Left cardiac atrium (tissue), 4 donors: ENCODE measurements at regions of chr19 and their contacts with region 1.

Region 1: DNA sequence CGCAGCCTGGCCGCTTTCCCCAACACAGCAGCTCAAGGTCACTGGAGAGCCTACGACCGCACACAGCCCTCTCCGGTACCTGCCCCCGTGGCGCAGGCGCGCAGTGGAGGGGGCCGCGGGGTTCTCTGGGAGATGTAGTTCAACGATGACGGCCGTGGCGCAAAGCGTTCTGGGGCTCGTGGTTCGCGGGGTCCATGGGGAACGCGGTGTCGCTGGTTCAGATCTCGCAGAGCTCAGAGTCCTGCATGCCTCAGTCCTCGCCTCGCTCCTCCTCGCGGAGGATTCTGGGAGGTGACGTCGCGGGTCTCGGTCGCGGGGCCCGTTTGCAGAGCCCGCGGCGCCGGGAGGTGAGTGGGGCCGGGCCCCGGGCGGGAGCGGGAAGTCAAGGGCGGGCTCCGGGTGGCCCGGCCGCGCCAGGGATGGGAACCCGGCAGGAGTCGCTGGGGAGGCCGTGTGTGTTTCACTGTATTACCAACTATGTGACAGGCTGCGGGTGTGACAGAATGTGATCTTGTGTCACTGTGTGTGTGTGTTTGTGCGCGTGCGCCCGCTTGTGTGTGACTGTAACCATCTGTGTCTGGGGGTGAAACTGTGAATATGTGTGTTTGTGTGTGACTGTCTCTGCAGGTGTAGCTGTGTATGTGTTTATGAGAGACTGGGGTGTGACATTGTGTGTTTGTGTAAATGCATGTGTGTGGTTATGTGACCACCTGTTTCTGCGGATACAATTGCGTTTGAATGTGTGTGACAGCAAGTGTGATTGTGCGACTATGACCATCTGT is at the start of gene ZNF527:
- DNase-seq: peak; percentile 99
- ATAC-seq: peak; percentile 100
- total RNA-seq, gene ZNF527: 6.1 to 7.1 TPM

Region 2: DNA sequence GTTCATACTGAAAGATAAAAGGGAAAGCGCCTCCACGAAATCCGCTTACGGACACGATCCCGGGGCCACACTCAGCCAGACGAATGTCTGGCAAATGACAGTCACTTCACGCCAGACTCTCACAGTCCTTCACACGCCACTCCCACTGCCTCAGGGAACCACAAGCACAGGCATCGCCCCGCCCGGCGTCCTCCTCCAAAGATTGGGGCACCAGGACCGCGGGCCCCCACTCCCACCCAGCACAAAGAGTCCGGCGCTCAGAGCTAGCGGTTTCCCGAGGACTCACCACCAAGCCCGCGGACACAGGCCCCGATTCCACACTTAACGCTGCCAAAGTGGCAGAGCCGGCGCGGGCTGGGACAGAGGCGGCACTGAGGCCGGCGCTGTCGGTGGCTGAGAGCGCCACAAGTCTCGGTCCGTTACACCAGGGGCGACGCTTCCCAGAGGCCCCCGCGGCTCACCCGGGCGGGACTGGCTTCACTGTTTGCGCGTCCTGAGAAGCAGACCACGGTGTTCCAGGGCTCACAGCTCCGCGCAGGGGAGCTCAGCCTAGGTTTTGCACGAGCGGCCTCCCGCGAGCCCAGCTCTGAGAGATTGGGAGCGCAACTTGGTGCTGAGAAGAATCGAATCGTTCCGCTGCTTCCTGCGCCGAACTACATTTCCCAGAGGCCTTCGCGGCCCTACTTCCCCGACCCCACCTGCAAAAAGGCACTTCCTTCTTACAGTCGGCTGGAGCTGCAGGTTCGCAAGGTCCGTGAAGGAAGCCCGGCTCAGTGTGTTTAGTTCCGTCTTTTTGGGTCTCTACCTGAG is 95.9 kb after region 1 on chr19 and contains the start of gene ZNF569:
- intact Hi-C with region 1: loop called in 1 of 2 experiments (anchors 5 kb)
- DNase-seq: peak; percentile 93
- ATAC-seq: peak; percentile 83 to 88
- total RNA-seq, gene ZNF569: 6.1 to 6.8 TPM

Region 3: DNA sequence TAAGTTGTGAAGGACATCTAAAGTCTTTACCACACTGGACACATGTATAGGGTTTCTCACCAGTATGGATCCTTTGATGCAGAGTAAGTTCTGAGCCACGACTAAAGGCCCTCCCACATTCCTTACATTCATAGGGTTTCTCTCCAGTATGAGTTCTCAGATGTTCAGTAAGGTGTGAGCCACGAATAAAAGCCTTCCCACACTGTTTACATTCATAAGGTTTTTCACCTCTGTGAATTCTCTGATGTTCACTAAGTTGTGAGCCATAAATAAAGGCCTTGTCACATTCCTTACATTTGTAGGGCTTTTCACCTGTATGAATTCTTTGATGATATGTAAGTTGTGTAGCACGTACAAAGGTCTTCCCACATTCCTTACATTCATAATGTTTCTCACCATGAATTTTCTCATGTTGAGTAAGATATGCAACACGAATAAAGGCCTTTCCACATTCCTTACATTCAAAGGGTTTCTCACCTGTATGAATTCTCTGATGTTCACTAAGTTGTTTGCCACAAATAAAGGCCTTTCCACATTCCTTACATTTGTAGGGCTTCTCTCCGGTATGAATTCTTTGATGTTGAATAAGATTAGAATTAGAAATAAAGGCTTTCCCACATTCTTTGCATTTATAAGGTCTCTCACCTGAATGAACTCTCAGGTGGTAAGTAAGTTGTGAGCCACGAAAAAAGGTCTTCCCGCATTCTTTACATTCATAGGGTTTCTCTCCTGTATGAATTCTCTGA is 193.7 kb after region 1 on chr19:
- intact Hi-C with region 1: no loop called
- DNase-seq: no peak
- ATAC-seq: no peak